ENCODE measurements at regions of chr4 and their contacts with region 1.

Region 1: GRCh38 chr4:25986807-25987206 is 72.8 kb downstream of the SMIM20 start:
- DNase-seq: no peak
- ATAC-seq: no peak
- H3K4me3 ChIP-seq: no peak overlapping the region
- H3K27ac ChIP-seq: no peak overlapping the region
- H3K4me1 ChIP-seq: peaks cover 0 to 14% (median 9%) of the 10 kb centered on the region in 9 donors
- H3K27me3 ChIP-seq: no peaks in the 10 kb centered on the region
- CTCF ChIP-seq: no peak

Region 2: GRCh38 chr4:25779016-25779415 is 207.8 kb before region 1 on chr4:
- intact Hi-C with region 1: no loop called
- DNase-seq: no peak
- ATAC-seq: no peak
- H3K4me3 ChIP-seq: no peak overlapping the region
- H3K27ac ChIP-seq: no peak overlapping the region
- H3K4me1 ChIP-seq: peaks cover 0 to 5% (median 0%) of the 10 kb centered on the region in 9 donors
- H3K27me3 ChIP-seq: no peaks in the 10 kb centered on the region
- CTCF ChIP-seq: no peak

Region 3: GRCh38 chr4:25919676-25920075 is 67.1 kb before region 1 on chr4:
- intact Hi-C with region 1: loop called in 2 of 10 experiments (anchors 5 to 10 kb)
- DNase-seq: no peak
- ATAC-seq: no peak
- H3K4me3 ChIP-seq: no peak overlapping the region
- H3K27ac ChIP-seq: no peak overlapping the region
- H3K4me1 ChIP-seq: peaks cover 0 to 46% (median 32%) of the 10 kb centered on the region in 9 donors
- H3K27me3 ChIP-seq: no peaks in the 10 kb centered on the region
- CTCF ChIP-seq: no peak

Measured in heart right ventricle (tissue), 16 donors.